ENCODE measurements at regions of chr21 and their contacts with region 1.

Region 1: DNA sequence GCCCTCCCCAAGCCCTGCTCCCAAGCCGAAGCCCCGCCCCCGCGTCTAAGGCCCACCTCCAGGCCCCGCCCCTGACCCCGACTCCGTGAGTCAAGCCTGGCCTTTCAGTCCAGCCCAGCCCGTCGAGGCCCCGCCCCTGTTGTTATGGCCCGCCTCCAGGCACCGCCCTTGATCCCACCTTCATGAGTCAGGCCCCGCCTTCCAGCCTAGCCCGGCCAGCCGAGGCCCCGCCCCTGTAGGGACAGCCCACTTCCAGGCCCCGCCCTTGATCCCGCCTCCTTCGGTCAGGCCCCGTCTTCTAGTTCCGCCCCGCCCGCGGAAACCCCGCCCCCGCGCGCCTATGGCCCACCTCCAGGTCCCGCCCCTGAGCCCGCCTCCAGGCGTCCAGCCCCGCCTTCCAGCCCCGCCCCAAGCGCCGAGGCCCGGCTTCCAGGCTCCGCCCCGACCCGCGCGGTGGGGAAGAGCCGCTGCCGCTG is 247 bp upstream of the DOP1B start:
- DNase-seq: peak; percentile 99 to 100 (median 100)
- H3K4me3 ChIP-seq: peak overlapping the region; percentile 63 to 70
- H3K4me3 Mint-ChIP-seq: peak overlapping the region; percentile 79 to 92 (median 86)
- H3K27ac ChIP-seq: peak overlapping the region; percentile 64
- H3K27ac Mint-ChIP-seq: peak overlapping the region; percentile 36 to 87 (median 60)
- H3K4me1 ChIP-seq: peaks cover 26% of the 10 kb centered on the region
- H3K4me1 Mint-ChIP-seq: peaks cover 23 to 57% (median 34%) of the 10 kb centered on the region in 4 donors
- H3K27me3 ChIP-seq: no peaks in the 10 kb centered on the region
- H3K27me3 Mint-ChIP-seq: no peaks in the 10 kb centered on the region

Region 2: DNA sequence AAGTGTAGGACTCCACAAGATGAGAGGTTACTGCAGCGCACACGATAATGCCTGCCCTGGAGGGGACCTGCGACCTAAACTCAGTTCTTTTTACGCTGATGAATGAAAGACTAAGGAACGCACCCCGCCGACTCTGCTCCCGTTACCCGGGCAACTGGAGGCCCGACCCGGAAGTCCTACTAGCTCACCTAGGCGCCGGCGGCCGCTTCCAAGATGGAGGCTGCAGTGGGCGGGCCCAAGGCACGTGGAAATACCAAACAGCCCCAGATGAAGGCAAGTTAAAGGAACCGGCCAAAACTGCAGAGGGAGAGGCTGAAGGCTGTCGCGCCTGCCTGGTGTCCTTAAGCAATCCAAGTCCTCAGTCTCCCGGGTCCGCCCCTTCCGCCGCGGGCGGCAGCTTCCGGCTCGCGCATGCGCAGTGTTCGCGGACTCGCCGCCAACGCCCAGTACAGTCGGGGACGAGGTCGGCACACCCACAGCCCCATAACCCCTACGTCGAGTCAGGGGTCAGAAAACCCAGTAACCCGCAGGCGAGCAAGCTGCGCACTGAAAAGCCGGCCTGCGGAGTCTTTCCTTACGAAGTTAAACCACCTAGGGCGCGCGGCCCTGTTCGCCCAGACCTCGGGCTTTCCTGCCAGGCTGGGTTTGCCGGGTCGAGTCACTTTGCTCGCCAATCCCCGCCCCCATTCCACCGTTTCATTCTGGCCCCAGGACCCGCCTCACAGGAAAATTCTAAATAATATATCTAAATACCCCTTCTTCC is 96.0 kb before region 1 on chr21 and contains the start of gene SETD4:
- CTCF ChIA-PET with region 1: interaction called, 3 read pairs
- POLR2A ChIA-PET with region 1: interaction called, 3 read pairs
- intact Hi-C with region 1: loop called (anchors 1 kb)
- DNase-seq: peak; percentile 91 to 95 (median 93)
- H3K4me3 ChIP-seq: peak within 1 kb of the TSS; percentile 94 to 98
- H3K4me3 Mint-ChIP-seq: peak within 1 kb of the TSS; percentile 93 to 99 (median 96)
- H3K27ac ChIP-seq: peak within 1 kb of the TSS; percentile 83
- H3K27ac Mint-ChIP-seq: peak within 1 kb of the TSS; percentile 98 to 99 (median 98)
- H3K4me1 ChIP-seq: peaks cover 13% of the 10 kb centered on the region
- H3K4me1 Mint-ChIP-seq: peaks cover 6 to 34% (median 14%) of the 10 kb centered on the region in 4 donors
- H3K27me3 ChIP-seq: no peaks in the 10 kb centered on the region
- H3K27me3 Mint-ChIP-seq: no peaks in the 10 kb centered on the region
- total RNA-seq, gene SETD4: 30.3 to 31.0 TPM

Region 3: GRCh38 chr21:36169436-36170128 is 13.2 kb after region 1 on chr21:
- CTCF ChIA-PET with region 1: interaction called, 83 read pairs
- POLR2A ChIA-PET with region 1: interaction called, 28 read pairs
- intact Hi-C with region 1: loop called (anchors 1 kb)
- DNase-seq: no peak
- H3K4me3 ChIP-seq: no peak overlapping the region
- H3K4me3 Mint-ChIP-seq: no peak overlapping the region
- H3K27ac ChIP-seq: no peak overlapping the region
- H3K27ac Mint-ChIP-seq: peak overlapping the region in 1 of 7 donors; percentile 86
- H3K4me1 ChIP-seq: peaks cover 16% of the 10 kb centered on the region
- H3K4me1 Mint-ChIP-seq: peaks cover 6 to 19% (median 7%) of the 10 kb centered on the region in 4 donors
- H3K27me3 ChIP-seq: no peaks in the 10 kb centered on the region
- H3K27me3 Mint-ChIP-seq: no peaks in the 10 kb centered on the region

Region 4: GRCh38 chr21:36260030-36260787 is 103.8 kb after region 1 on chr21:
- CTCF ChIA-PET with region 1: interaction called, 6 read pairs
- POLR2A ChIA-PET with region 1: no interaction called
- intact Hi-C with region 1: loop called (anchors 1 kb)
- DNase-seq: peak; percentile 58 to 72 (median 67)
- H3K4me3 ChIP-seq: peak overlapping the region; percentile 30 to 61
- H3K4me3 Mint-ChIP-seq: peak overlapping the region; percentile 76 to 87 (median 86)
- H3K27ac ChIP-seq: peak overlapping the region; percentile 44
- H3K27ac Mint-ChIP-seq: peak overlapping the region; percentile 57 to 95 (median 90)
- H3K4me1 ChIP-seq: peaks cover 12% of the 10 kb centered on the region
- H3K4me1 Mint-ChIP-seq: peaks cover 10 to 17% (median 15%) of the 10 kb centered on the region in 4 donors
- H3K27me3 ChIP-seq: no peaks in the 10 kb centered on the region
- H3K27me3 Mint-ChIP-seq: no peaks in the 10 kb centered on the region

Region 5: DNA sequence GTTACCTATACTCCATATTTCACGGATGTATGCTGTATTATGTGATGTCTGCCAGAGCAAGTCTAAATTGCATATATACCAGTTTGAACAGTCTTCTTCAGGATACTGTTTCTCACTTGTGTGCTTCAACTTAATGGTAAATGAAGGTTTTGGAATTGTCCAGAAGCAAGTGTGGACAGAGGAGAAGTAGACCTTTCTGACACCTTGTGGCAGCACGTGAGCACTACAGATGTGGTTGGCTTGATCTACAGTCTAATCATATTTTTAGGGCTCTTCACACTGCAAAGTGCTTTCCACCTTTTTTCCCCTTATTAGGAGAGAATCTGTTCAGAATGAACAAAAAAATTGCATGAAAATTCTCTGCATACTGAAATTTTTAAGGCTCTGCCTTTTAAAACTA is 174.5 kb after region 1 on chr21:
- CTCF ChIA-PET with region 1: interaction called, 12 read pairs
- POLR2A ChIA-PET with region 1: interaction called, 4 read pairs
- intact Hi-C with region 1: loop called (anchors 1 kb)
- DNase-seq: peak; percentile 43 to 61 (median 53)
- H3K4me3 ChIP-seq: no peak overlapping the region
- H3K4me3 Mint-ChIP-seq: peak overlapping the region in 2 of 8 donors; percentile 0 to 61
- H3K27ac ChIP-seq: no peak overlapping the region
- H3K27ac Mint-ChIP-seq: peak overlapping the region in 6 of 7 donors; percentile 58 to 75 (median 70)
- H3K4me1 ChIP-seq: peaks cover 53% of the 10 kb centered on the region
- H3K4me1 Mint-ChIP-seq: peaks cover 38 to 58% (median 47%) of the 10 kb centered on the region in 4 donors
- H3K27me3 ChIP-seq: no peaks in the 10 kb centered on the region
- H3K27me3 Mint-ChIP-seq: no peaks in the 10 kb centered on the region

Region 6: DNA sequence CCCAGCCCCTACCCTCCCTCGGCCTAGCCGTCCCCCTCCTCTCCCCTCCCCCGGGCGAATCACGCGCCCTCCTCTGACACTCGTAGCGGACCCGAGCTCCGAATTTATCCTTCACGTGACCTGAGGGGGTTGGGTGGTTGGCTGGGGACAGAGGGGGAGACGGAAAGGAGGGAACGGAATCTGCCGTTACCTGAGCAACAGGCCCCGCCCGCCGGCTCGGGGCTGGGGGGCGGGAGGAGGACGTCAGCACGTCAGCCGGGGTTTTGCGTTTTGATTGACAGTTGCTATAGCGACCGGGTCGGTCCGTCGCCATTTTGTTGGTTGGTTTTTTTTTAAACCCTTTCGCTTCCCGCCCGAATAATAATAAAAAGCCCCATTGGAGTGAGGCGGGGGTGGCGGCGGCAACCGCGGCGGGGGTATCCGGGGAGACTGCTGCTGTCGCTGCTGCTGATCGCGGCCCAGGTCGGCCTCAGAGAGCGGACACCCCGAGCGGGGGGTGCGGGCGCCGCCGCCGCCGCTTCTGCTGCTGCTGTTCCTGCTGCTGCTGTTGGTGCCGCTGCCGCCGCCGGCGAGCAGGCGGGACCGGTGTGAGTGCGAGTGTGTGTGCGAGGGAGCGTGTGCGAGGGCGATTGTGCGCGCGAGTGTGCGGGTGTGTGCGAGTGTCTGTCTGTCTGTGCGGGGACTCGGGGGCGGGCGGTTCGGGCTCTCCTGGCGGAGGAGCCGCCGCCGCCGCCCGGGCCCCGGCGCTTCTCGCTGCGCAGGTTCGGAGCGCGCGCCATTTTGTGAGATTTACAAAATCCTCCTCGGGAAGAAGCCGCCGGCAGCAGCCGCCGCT is 1210.3 kb after region 1 on chr21 and contains the start of gene DYRK1A:
- CTCF ChIA-PET with region 1: no interaction called
- POLR2A ChIA-PET with region 1: no interaction called
- intact Hi-C with region 1: loop called (anchors 10 kb)
- DNase-seq: peak; percentile 98 to 99 (median 99)
- H3K4me3 ChIP-seq: peak within 1 kb of the TSS; percentile 1 to 69
- H3K4me3 Mint-ChIP-seq: peak within 1 kb of the TSS; percentile 95 to 100 (median 100)
- H3K27ac ChIP-seq: peak within 1 kb of the TSS; percentile 98
- H3K27ac Mint-ChIP-seq: peak within 1 kb of the TSS; percentile 99 to 100 (median 100)
- H3K4me1 ChIP-seq: peaks cover 43% of the 10 kb centered on the region
- H3K4me1 Mint-ChIP-seq: peaks cover 32 to 61% (median 40%) of the 10 kb centered on the region in 4 donors
- H3K27me3 ChIP-seq: no peaks in the 10 kb centered on the region
- H3K27me3 Mint-ChIP-seq: peaks cover 1 to 2% of the 10 kb centered on the region in 2 donors
- total RNA-seq, gene DYRK1A: 126 to 130 TPM